ENCODE measurements at regions of chr11 and their contacts with region 1.

Region 1: DNA sequence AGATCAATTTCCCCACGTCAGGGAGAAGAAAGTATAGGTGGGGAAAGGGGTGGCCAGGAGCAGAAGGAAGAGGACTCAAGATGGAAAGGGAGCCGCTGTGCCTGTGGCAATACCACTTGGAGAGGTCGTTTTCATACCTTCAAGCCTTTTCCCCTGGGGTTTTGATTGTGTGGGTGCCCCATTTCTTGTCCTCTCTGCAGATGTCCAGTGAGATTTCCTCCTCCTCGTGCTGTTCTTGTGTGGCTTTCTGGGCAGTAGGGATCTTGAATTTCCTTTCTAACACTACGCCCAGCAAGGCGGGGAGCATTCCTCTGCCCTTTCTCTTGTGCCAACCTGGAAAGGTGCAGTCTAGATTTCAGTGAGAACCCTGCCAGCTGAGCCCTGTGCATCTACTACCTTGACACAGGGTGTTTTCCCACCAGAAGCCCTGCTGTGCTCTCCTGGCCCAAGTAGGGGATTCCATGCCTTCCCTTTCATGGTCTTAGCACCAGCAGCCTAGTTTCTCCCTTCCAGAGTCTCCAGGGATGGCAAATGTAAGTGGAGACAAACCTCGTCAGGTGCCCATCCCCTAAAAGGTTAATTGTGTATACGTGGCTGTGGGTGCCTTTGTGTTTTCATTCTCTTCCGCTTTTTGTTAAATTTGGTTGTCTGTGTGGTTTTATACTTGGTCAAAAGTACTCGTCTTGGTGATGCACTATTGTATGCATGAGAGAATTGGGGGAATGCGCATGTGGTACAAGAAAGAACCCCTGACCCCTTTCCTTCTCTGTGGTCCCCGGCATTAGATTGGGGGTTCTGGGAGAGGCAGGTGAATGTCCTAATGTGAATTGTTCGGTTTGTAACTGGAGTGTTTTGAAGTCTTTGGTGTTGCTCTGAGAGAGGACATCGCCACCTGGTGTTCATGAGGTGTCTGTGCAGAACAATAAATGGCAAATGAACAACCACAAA is 71.4 kb upstream of the MPEG1 start:
- DNase-seq: peak in 2 of 5 donors; percentile 58 to 78
- H3K4me3 ChIP-seq: no peak overlapping the region
- H3K27ac ChIP-seq: no peak overlapping the region
- H3K4me1 ChIP-seq: no peaks in the 10 kb centered on the region
- H3K27me3 ChIP-seq: no peaks in the 10 kb centered on the region
- CTCF ChIP-seq: peak; percentile 81

Region 2: DNA sequence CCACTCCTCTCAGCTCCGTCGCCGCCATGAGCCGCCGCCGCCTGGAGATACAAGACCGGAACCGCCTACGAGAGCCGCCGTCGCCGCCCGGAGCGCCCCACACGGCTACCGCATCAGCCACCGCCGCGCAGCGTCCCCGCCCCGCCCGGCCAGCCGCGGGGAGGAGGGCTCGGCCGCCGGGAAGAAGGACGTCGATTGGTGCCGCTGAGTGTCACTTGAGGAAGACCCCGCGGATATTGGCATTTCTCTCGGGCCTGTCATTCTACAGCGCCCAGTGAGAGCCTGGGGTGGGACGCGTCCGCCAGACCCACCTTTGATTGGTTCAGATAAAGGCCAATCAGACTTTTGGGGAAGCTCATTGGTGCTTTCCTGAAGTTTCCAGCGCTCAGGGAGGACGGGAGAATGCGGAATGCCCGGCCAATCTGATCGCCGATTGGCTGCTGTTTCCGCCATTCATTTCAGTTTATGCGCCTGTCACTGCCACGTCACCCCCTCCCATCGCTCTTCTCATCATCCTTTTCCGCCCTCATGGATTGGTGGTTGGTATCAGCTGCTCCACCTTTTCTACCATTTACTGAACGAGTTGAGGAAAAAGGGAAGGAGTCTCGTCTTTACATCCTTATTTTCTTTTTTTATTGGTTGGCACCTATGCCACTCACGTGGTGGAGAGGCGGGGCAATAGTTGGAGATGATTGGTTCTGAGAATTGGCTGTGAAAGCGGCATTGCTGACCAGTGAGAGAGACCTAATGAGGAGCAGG is 331.7 kb after region 1 on chr11 and contains the start of gene OSBP:
- intact Hi-C with region 1: no loop called
- DNase-seq: peak; percentile 99 to 100 (median 100)
- H3K4me3 ChIP-seq: peak within 1 kb of the TSS; percentile 84 to 97 (median 85)
- H3K27ac ChIP-seq: peak within 1 kb of the TSS; percentile 93 to 98
- H3K4me1 ChIP-seq: peaks cover 0 to 27% (median 20%) of the 10 kb centered on the region in 3 donors
- H3K27me3 ChIP-seq: no peaks in the 10 kb centered on the region
- CTCF ChIP-seq: no peak
- total RNA-seq, gene OSBP: 53.8 TPM

Region 3: GRCh38 chr11:59680287-59681154 is 396.4 kb after region 1 on chr11:
- intact Hi-C with region 1: loop called (anchors 10 kb)
- DNase-seq: peak in 4 of 5 donors; percentile 71 to 90 (median 78)
- H3K4me3 ChIP-seq: no peak overlapping the region
- H3K27ac ChIP-seq: peak overlapping the region; percentile 0 to 40
- H3K4me1 ChIP-seq: peaks cover 0 to 8% (median 4%) of the 10 kb centered on the region in 3 donors
- H3K27me3 ChIP-seq: no peaks in the 10 kb centered on the region
- CTCF ChIP-seq: peak; percentile 77